CD8-positive, alpha-beta T cell (primary cell): ENCODE measurements at regions of chr1 and their contacts with region 1.

Region 1: DNA sequence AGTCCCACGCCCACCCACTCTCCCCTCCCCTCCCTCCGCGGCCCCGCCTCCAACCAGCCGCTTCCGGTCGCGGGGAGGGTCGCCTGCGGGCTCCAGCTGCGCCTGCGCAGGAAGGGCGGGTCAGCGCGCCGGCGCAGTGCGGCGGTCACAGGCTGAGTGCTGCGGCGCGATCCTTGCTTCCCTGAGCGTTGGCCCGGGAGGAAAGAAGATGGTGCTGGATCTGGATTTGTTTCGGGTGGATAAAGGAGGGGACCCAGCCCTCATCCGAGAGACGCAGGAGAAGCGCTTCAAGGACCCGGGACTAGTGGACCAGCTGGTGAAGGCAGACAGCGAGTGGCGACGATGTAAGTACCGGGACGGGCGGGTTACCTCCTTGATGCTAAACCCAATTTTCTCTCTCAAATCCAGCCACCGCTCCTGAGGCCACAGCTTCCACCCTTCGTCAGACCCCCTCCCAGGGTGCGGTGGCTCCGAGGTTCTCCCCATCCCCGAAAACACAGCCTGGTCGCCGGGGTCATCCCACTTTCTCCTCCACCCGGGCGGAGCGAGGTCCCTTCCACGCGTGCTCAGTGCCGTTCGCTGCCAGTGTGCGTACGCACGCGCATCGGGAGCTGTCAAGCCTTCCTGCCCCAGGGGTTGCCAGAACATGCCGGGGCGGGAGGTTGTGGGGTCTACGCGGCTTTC is at the start of gene SARS1:
- DNase-seq: peak; percentile 67 to 94 (median 85)
- ATAC-seq: peak; percentile 86
- H3K4me3 ChIP-seq: peak within 1 kb of the TSS; percentile 96 to 100
- H3K4me3 Mint-ChIP-seq: peak within 1 kb of the TSS; percentile 100
- H3K27ac ChIP-seq: peak within 1 kb of the TSS; percentile 79
- H3K27ac Mint-ChIP-seq: peak within 1 kb of the TSS; percentile 95
- H3K4me1 ChIP-seq: peaks cover 27% of the 10 kb centered on the region
- H3K4me1 Mint-ChIP-seq: peaks cover 44% of the 10 kb centered on the region
- H3K27me3 ChIP-seq: no peaks in the 10 kb centered on the region
- H3K27me3 Mint-ChIP-seq: peaks cover 2% of the 10 kb centered on the region
- CTCF ChIP-seq: no peak
- total RNA-seq, gene SARS1: 113 to 118 TPM

Region 2: GRCh38 chr1:108963052-108963686 is 250.8 kb before region 1 on chr1 and contains the start of gene CLCC1:
- CTCF ChIA-PET with region 1: no interaction called
- POLR2A ChIA-PET with region 1: interaction called, 3 read pairs
- intact Hi-C with region 1: loop called in 1 of 2 experiments (anchors 1 kb)
- DNase-seq: peak; percentile 83 to 96 (median 91)
- ATAC-seq: peak; percentile 87
- H3K4me3 ChIP-seq: peak within 1 kb of the TSS; percentile 57 to 86
- H3K4me3 Mint-ChIP-seq: peak within 1 kb of the TSS; percentile 87
- H3K27ac ChIP-seq: peak within 1 kb of the TSS; percentile 75 to 88
- H3K27ac Mint-ChIP-seq: peak within 1 kb of the TSS; percentile 92
- H3K4me1 ChIP-seq: peaks cover 24% of the 10 kb centered on the region
- H3K4me1 Mint-ChIP-seq: peaks cover 39% of the 10 kb centered on the region
- H3K27me3 ChIP-seq: no peaks in the 10 kb centered on the region
- H3K27me3 Mint-ChIP-seq: no peaks in the 10 kb centered on the region
- CTCF ChIP-seq: no peak
- total RNA-seq, gene CLCC1: 4.6 to 5.8 TPM

Region 3: GRCh38 chr1:109061183-109061582 is 152.7 kb before region 1 on chr1:
- CTCF ChIA-PET with region 1: no interaction called
- POLR2A ChIA-PET with region 1: no interaction called
- intact Hi-C with region 1: no loop called
- DNase-seq: no peak
- ATAC-seq: no peak
- H3K4me3 ChIP-seq: no peak overlapping the region
- H3K4me3 Mint-ChIP-seq: no peak overlapping the region
- H3K27ac ChIP-seq: no peak overlapping the region
- H3K27ac Mint-ChIP-seq: no peak overlapping the region
- H3K4me1 ChIP-seq: no peaks in the 10 kb centered on the region
- H3K4me1 Mint-ChIP-seq: no peaks in the 10 kb centered on the region
- H3K27me3 ChIP-seq: no peaks in the 10 kb centered on the region
- H3K27me3 Mint-ChIP-seq: no peaks in the 10 kb centered on the region
- CTCF ChIP-seq: no peak

Region 4: DNA sequence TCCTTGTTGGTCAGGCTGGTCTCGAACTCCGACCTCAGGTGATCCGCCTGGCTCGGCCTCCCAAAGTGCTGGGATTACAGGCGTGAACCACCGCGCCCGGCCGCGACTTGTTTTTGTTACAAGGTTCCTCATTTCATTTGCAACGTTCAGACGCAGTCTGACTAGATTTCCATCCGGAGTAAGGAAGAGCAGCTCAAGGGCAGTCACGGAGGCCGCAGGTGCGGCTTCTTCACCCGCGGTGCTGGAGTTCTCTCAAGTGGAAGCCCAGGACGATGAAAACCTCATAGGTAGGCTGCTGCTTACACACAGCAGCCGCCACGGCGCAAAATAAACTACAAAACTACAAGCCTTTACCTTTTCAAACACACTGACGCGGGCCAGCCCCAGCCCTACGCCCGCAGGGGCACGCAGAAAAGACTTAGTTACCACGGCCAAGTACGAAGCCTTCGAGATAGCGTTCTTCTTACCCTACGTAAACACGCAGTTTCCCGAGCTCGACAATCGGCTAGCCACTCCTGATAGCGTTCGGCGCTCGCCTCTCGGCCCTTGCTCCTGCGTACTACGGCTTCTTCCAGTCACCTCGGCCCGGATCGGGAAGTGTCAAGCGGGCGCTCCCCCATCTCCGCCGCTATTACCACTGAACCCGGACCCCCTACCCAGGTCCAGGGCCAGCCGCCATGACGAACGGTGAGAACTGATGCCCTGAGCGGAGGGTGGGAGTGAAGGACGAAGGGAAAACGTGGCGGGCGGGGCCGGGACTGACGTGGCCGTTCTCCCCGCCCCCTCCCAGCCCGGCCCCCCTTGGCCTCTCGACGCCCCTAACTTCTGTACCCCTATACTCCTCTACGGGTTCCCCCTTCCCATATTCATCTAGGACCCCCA is 123.5 kb before region 1 on chr1 and contains the start of gene TMEM167B:
- CTCF ChIA-PET with region 1: no interaction called
- POLR2A ChIA-PET with region 1: interaction called, 3 read pairs
- intact Hi-C with region 1: loop called in 1 of 2 experiments (anchors 1 kb)
- DNase-seq: peak; percentile 76 to 94 (median 88)
- ATAC-seq: peak; percentile 94
- H3K4me3 ChIP-seq: peak within 1 kb of the TSS; percentile 84 to 96
- H3K4me3 Mint-ChIP-seq: peak within 1 kb of the TSS; percentile 96
- H3K27ac ChIP-seq: peak within 1 kb of the TSS; percentile 82 to 98
- H3K27ac Mint-ChIP-seq: peak within 1 kb of the TSS; percentile 95
- H3K4me1 ChIP-seq: peaks cover 20% of the 10 kb centered on the region
- H3K4me1 Mint-ChIP-seq: peaks cover 33% of the 10 kb centered on the region
- H3K27me3 ChIP-seq: no peaks in the 10 kb centered on the region
- H3K27me3 Mint-ChIP-seq: no peaks in the 10 kb centered on the region
- CTCF ChIP-seq: no peak
- total RNA-seq, gene TMEM167B: 66.3 to 68.0 TPM

Region 5: GRCh38 chr1:109151164-109151990 is 62.5 kb before region 1 on chr1:
- CTCF ChIA-PET with region 1: no interaction called
- POLR2A ChIA-PET with region 1: no interaction called
- intact Hi-C with region 1: no loop called
- DNase-seq: no peak
- ATAC-seq: no peak
- H3K4me3 ChIP-seq: no peak overlapping the region
- H3K4me3 Mint-ChIP-seq: no peak overlapping the region
- H3K27ac ChIP-seq: no peak overlapping the region
- H3K27ac Mint-ChIP-seq: no peak overlapping the region
- H3K4me1 ChIP-seq: no peaks in the 10 kb centered on the region
- H3K4me1 Mint-ChIP-seq: no peaks in the 10 kb centered on the region
- H3K27me3 ChIP-seq: no peaks in the 10 kb centered on the region
- H3K27me3 Mint-ChIP-seq: no peaks in the 10 kb centered on the region
- CTCF ChIP-seq: no peak

Region 6: DNA sequence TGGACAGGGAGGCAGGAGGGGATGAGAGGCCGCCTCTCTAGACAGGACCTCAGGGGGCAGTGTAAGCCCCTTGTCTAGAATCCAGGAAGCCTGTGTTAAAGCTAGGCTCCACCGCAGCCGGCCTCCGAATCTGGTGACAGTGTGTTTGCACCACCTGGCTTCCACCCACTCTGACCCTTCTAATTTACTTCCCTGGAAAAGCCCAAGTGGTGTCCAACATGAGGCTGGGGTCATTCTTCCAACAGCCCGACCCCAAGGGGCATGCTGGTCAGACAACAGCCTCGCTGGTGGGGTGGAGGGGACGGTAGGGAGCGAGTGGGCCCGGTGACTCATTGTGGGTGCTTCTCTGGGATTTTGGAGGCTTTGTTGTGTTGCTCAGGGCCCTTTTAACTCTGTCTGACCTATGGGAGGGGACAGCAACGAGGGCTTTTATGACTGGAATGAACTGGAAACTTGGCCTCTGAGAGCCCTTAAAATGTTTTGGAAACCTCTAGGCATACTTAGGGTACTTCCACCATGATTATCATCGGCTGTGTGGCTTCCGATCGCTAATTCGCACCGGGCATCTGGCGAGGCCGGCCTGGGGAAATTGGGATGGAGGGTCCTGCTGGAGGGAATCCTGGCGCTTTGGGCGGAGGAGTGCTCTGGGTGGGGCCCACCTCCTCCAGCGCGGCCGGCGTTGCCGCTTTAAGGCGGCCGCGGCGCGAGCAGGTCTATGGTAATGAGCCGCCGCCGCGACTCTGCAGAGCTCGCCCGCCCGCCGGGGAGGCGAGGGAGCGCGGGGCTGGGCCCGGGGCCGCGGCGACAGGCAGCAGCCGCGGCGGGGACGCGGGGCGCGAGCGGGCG is 35.1 kb after region 1 on chr1 and contains the start of gene CELSR2:
- CTCF ChIA-PET with region 1: no interaction called
- POLR2A ChIA-PET with region 1: interaction called, 3 read pairs
- intact Hi-C with region 1: loop called in 1 of 2 experiments (anchors 1 kb)
- DNase-seq: peak; percentile 21 to 83 (median 57)
- ATAC-seq: peak; percentile 97
- H3K4me3 ChIP-seq: peak within 1 kb of the TSS; percentile 39 to 41
- H3K4me3 Mint-ChIP-seq: peak within 1 kb of the TSS; percentile 72
- H3K27ac ChIP-seq: no peak within 1 kb of the TSS
- H3K27ac Mint-ChIP-seq: no peak within 1 kb of the TSS
- H3K4me1 ChIP-seq: peaks cover 14% of the 10 kb centered on the region
- H3K4me1 Mint-ChIP-seq: peaks cover 14% of the 10 kb centered on the region
- H3K27me3 ChIP-seq: peaks cover 0 to 3% of the 10 kb centered on the region in 2 experiments
- H3K27me3 Mint-ChIP-seq: peaks cover 8% of the 10 kb centered on the region
- CTCF ChIP-seq: no peak
- total RNA-seq, gene CELSR2: 3.8 TPM

Region 7: DNA sequence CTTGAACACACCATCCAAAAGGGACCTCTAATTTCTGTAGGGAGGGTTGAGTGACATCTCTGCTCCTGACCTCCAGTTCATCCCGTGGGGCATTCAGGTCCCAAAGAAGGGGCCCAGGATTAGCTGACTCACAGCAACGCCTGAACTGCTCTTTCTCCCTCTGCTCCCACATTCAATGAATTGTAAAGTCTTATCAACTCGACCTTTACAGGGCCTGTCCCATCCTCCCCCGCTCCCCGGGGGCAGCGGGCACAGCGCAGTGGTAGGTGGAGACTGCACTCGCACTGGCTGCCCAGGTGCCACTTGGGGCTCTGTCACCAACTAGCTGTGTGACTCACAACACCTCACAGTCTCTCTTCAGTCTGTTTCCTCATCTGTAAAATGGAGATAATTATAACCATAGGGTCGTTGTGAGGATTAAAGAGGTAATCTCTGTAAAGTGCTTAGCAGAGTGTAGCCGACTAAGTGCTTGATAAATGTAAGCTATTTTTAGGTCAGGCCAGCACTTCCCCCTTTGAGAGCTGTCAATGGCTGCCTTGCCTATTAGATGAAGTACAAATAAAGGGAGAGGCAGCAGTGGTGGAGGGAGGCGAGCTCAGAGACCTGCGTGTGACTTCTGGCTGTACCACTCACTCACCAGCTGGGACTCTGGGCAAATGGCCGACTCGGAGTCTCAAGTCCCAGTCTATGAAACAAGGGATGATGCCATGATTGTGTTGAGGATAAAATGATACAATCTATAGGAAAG is 93.5 kb after region 1 on chr1:
- CTCF ChIA-PET with region 1: no interaction called
- POLR2A ChIA-PET with region 1: no interaction called
- intact Hi-C with region 1: no loop called
- DNase-seq: no peak
- ATAC-seq: no peak
- H3K4me3 ChIP-seq: no peak overlapping the region
- H3K4me3 Mint-ChIP-seq: no peak overlapping the region
- H3K27ac ChIP-seq: no peak overlapping the region
- H3K27ac Mint-ChIP-seq: no peak overlapping the region
- H3K4me1 ChIP-seq: no peaks in the 10 kb centered on the region
- H3K4me1 Mint-ChIP-seq: no peaks in the 10 kb centered on the region
- H3K27me3 ChIP-seq: no peaks in the 10 kb centered on the region
- H3K27me3 Mint-ChIP-seq: peaks cover 3% of the 10 kb centered on the region
- CTCF ChIP-seq: no peak